Activated B cell treated with CpG ODN at 0.5 μM for 24 hours (primary cell): ENCODE measurements at regions of chr1 and their contacts with region 1.

Region 1: GRCh38 chr1:199976496-199977144 is 50.9 kb upstream of the NR5A2 start:
- DNase-seq: no peak
- ATAC-seq: no peak
- H3K4me3 Mint-ChIP-seq: no peak overlapping the region
- H3K27ac Mint-ChIP-seq: no peak overlapping the region
- H3K4me1 Mint-ChIP-seq: peaks cover 24% of the 10 kb centered on the region
- H3K27me3 Mint-ChIP-seq: peaks cover 52% of the 10 kb centered on the region
- CTCF ChIP-seq: no peak

Region 2: DNA sequence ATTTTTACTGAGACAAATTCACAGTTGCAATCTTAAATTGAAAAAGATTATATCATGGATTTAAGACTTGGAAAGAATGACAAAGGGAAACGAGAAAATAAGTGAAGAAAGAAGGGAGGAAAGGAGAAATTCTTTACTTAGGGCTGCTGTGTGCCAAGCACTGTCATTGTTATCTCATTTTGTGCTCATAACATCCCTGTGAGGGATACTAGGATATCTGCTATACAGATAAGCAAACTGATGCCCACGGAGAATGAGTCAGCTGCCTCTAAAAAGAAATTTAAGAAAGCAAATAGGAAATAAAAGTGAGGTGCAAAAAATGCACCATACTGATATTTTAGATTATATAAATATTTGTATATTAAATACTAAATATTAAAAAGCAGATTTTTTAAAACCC is 132.8 kb before region 1 on chr1:
- CTCF ChIA-PET with region 1: no interaction called
- POLR2A ChIA-PET with region 1: no interaction called
- intact Hi-C with region 1: no loop called
- DNase-seq: no peak
- ATAC-seq: no peak
- H3K4me3 Mint-ChIP-seq: no peak overlapping the region
- H3K27ac Mint-ChIP-seq: no peak overlapping the region
- H3K4me1 Mint-ChIP-seq: no peaks in the 10 kb centered on the region
- H3K27me3 Mint-ChIP-seq: peaks cover 14% of the 10 kb centered on the region
- CTCF ChIP-seq: no peak

Region 3: GRCh38 chr1:199944986-199945385 is 31.6 kb before region 1 on chr1:
- CTCF ChIA-PET with region 1: no interaction called
- POLR2A ChIA-PET with region 1: no interaction called
- intact Hi-C with region 1: loop called (anchors 5 kb)
- DNase-seq: no peak
- ATAC-seq: no peak
- H3K4me3 Mint-ChIP-seq: no peak overlapping the region
- H3K27ac Mint-ChIP-seq: no peak overlapping the region
- H3K4me1 Mint-ChIP-seq: peaks cover 4% of the 10 kb centered on the region
- H3K27me3 Mint-ChIP-seq: peaks cover 19% of the 10 kb centered on the region
- CTCF ChIP-seq: no peak

Region 4: DNA sequence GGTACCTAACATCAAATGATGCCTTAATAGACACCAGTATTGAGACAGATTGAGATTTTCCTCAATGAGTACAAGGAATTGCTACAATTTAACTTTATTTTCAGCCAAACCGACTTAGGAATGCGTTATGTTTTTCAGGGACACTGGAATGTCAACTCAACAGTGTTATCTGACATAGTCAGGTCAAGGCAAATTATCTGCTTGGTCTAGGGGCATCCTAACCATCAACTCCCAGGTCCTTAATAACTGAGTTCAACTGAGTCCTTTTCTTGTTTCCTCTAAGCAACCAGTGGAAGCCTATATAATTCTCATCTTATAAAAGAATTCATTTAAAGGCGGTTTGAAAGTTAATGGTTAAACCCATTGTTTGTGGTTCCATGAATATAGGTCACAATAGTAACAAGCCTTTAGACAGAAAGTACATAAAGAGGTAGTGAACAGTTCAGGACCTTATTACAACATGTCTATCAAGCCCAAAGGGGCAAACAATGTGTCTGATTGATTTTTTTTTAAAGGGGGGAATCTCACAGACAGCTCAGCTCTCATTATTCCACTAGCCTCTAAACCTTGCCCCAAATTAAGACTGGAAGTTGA is 18.6 kb after region 1 on chr1:
- CTCF ChIA-PET with region 1: no interaction called
- POLR2A ChIA-PET with region 1: no interaction called
- intact Hi-C with region 1: no loop called
- DNase-seq: no peak
- ATAC-seq: no peak
- H3K4me3 Mint-ChIP-seq: no peak overlapping the region
- H3K27ac Mint-ChIP-seq: no peak overlapping the region
- H3K4me1 Mint-ChIP-seq: no peaks in the 10 kb centered on the region
- H3K27me3 Mint-ChIP-seq: peaks cover 10% of the 10 kb centered on the region
- CTCF ChIP-seq: no peak

Region 5: GRCh38 chr1:200029035-200029821 is 52.6 kb after region 1 on chr1:
- CTCF ChIA-PET with region 1: no interaction called
- POLR2A ChIA-PET with region 1: no interaction called
- intact Hi-C with region 1: loop called (anchors 5 kb)
- DNase-seq: peak; percentile 21
- ATAC-seq: peak; percentile 42
- H3K4me3 Mint-ChIP-seq: peak overlapping the region; percentile 67
- H3K27ac Mint-ChIP-seq: no peak overlapping the region
- H3K4me1 Mint-ChIP-seq: peaks cover 14% of the 10 kb centered on the region
- H3K27me3 Mint-ChIP-seq: peaks cover 49% of the 10 kb centered on the region
- CTCF ChIP-seq: no peak